ENCODE measurements at regions of chr9 and their contacts with region 1.

Region 1: DNA sequence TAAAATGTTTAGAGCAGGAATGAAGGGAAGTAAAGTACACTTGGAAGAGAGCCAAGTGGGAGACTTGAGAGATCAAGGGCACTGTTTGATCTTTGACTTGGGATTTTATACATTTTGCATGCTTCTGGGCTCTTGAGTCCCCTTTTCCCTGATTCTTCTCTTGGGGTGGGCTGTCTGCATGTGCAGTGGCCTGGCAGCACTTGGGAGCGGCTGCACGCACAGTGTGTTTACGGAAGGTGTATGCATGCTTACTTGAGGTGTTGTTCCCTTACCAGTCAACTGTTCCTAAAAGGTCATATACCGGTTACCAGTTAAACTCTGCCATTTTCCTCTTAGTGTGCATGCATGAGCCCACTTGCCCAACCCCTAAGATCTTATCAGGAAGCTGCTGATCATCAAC is 377.7 kb downstream of the CYLC2 start:
- DNase-seq: no peak
- ATAC-seq: no peak
- H3K4me3 ChIP-seq: no peak overlapping the region
- H3K4me3 Mint-ChIP-seq: no peak overlapping the region
- H3K27ac ChIP-seq: no peak overlapping the region
- H3K27ac Mint-ChIP-seq: no peak overlapping the region
- H3K4me1 ChIP-seq: no peaks in the 10 kb centered on the region
- H3K4me1 Mint-ChIP-seq: no peaks in the 10 kb centered on the region
- H3K27me3 ChIP-seq: no peaks in the 10 kb centered on the region
- H3K27me3 Mint-ChIP-seq: no peaks in the 10 kb centered on the region

Region 2: DNA sequence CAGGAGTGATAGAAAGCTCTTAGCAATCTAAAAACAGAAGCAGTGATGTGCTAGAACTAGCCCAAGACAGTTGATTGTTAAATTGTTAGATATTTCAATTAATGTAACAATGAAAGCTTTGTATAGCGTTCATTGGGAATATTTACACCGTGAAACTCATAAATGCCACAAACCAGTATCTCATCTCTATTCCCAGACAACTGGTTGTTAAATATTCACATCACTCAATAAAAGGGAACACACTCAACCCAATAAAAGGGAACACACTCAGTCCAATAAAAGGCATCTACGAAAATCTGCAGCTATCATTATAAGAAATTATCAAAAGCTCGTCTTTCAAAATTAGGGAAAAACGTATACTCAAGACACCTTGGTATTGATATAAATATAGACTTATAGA is 106.8 kb before region 1 on chr9:
- CTCF ChIA-PET with region 1: no interaction called
- POLR2A ChIA-PET with region 1: no interaction called
- intact Hi-C with region 1: no loop called
- DNase-seq: no peak
- ATAC-seq: no peak
- H3K4me3 ChIP-seq: no peak overlapping the region
- H3K4me3 Mint-ChIP-seq: no peak overlapping the region
- H3K27ac ChIP-seq: no peak overlapping the region
- H3K27ac Mint-ChIP-seq: no peak overlapping the region
- H3K4me1 ChIP-seq: no peaks in the 10 kb centered on the region
- H3K4me1 Mint-ChIP-seq: no peaks in the 10 kb centered on the region
- H3K27me3 ChIP-seq: no peaks in the 10 kb centered on the region
- H3K27me3 Mint-ChIP-seq: no peaks in the 10 kb centered on the region

Region 3: GRCh38 chr9:103458826-103459225 is 86.0 kb after region 1 on chr9:
- CTCF ChIA-PET with region 1: no interaction called
- POLR2A ChIA-PET with region 1: no interaction called
- intact Hi-C with region 1: loop called in 1 of 2 experiments (anchors 10 kb)
- DNase-seq: no peak
- ATAC-seq: no peak
- H3K4me3 ChIP-seq: no peak overlapping the region
- H3K4me3 Mint-ChIP-seq: no peak overlapping the region
- H3K27ac ChIP-seq: no peak overlapping the region
- H3K27ac Mint-ChIP-seq: no peak overlapping the region
- H3K4me1 ChIP-seq: no peaks in the 10 kb centered on the region
- H3K4me1 Mint-ChIP-seq: no peaks in the 10 kb centered on the region
- H3K27me3 ChIP-seq: no peaks in the 10 kb centered on the region
- H3K27me3 Mint-ChIP-seq: no peaks in the 10 kb centered on the region

Region 4: GRCh38 chr9:103514767-103515166 is 141.9 kb after region 1 on chr9:
- CTCF ChIA-PET with region 1: no interaction called
- POLR2A ChIA-PET with region 1: no interaction called
- intact Hi-C with region 1: no loop called
- DNase-seq: no peak
- ATAC-seq: no peak
- H3K4me3 ChIP-seq: no peak overlapping the region
- H3K4me3 Mint-ChIP-seq: no peak overlapping the region
- H3K27ac ChIP-seq: no peak overlapping the region
- H3K27ac Mint-ChIP-seq: no peak overlapping the region
- H3K4me1 ChIP-seq: no peaks in the 10 kb centered on the region
- H3K4me1 Mint-ChIP-seq: no peaks in the 10 kb centered on the region
- H3K27me3 ChIP-seq: no peaks in the 10 kb centered on the region
- H3K27me3 Mint-ChIP-seq: no peaks in the 10 kb centered on the region

Measured in naive thymus-derived CD4-positive, alpha-beta T cell (primary cell).